ENCODE measurements at regions of chr7 and their contacts with region 1.

Region 1: DNA sequence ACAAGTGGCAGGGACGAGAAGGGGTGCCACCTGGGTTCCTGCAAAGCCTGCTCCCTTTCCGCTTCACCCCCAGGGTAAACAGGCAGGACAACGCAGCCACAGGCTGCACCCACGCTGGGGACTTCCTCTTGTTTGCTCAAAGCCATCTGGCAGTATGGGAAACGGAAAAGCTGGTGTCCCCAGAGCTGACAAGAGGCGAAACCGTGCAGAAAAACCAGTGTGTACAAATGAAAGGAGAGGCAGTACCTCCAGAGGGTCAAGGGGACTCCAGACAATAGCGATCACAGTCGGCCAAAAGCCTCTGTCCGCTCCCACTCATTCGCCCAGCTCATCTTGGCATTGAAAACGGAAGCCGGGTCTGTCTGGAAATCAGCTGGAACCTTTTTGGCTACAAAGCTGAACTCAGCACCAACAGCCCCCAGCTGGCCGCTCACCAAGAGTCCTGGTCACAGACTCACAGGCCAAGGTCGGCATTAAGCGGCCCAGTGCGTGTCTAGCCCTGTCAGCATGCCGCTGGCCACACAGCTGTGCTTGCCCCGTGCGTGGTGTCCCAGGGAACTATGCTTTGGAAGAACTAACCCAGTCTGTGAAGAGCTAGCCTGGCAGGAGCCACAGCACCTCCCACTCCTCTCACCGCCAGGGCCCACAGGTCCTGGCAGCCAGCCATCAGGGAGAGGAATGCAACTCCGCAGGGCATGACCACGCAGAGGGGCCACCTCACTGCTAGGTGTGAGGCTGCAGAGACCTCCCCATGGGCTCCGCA is 10.4 kb downstream of the TNS3 start:
- DNase-seq: peak; percentile 70 to 92 (median 90)
- H3K4me3 ChIP-seq: peak overlapping the region in 4 of 7 experiments; percentile 42 to 63 (median 54)
- H3K27ac ChIP-seq: peak overlapping the region; percentile 83 to 86
- H3K4me1 ChIP-seq: peaks cover 31 to 97% (median 97%) of the 10 kb centered on the region in 4 experiments
- H3K27me3 ChIP-seq: no peaks in the 10 kb centered on the region

Region 2: GRCh38 chr7:47581806-47582763 is 10.6 kb after region 1 on chr7 and contains the start of gene TNS3:
- CTCF ChIA-PET with region 1: interaction called, 10 read pairs
- POLR2A ChIA-PET with region 1: interaction called, 10 read pairs
- DNase-seq: peak in 1 of 3 donors; percentile 64
- H3K4me3 ChIP-seq: peak within 1 kb of the TSS; percentile 77 to 90 (median 85)
- H3K27ac ChIP-seq: peak within 1 kb of the TSS; percentile 33 to 70
- H3K4me1 ChIP-seq: peaks cover 14 to 68% (median 58%) of the 10 kb centered on the region in 4 experiments
- H3K27me3 ChIP-seq: no peaks in the 10 kb centered on the region

Region 3: GRCh38 chr7:47651355-47652317 is 80.1 kb after region 1 on chr7:
- CTCF ChIA-PET with region 1: no interaction called
- POLR2A ChIA-PET with region 1: no interaction called
- DNase-seq: peak in 2 of 3 donors; percentile 74 to 84
- H3K4me3 ChIP-seq: no peak overlapping the region
- H3K27ac ChIP-seq: no peak overlapping the region
- H3K4me1 ChIP-seq: peaks cover 22 to 67% (median 42%) of the 10 kb centered on the region in 4 experiments
- H3K27me3 ChIP-seq: no peaks in the 10 kb centered on the region